Activated CD8-positive, alpha-beta T cell treated with anti-CD3 and anti-CD28 coated beads for 36 hours (primary cell): ENCODE measurements at regions of chr11 and their contacts with region 1.

Region 1: DNA sequence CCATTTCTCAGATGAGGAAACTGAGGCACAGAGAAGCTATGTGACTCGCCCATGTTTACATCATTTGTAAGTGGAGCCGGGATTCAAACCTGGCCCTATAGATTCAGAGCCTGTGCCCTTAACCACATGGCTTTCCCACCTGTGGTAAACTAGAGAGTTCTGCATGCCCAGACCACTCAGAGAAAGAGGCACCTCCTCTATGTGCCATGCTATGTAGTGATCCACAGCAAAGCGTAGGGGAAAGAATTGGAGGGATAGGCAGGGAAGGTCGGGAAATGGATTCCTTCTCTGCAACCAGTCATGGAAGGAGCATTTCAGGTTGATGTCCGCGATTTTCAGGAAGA is 15.4 kb upstream of the POU2AF2 start:
- DNase-seq: no peak
- ATAC-seq: peak; percentile 36
- H3K4me3 Mint-ChIP-seq: no peak overlapping the region
- H3K27ac Mint-ChIP-seq: no peak overlapping the region
- H3K4me1 Mint-ChIP-seq: peaks cover 15% of the 10 kb centered on the region
- H3K27me3 Mint-ChIP-seq: peaks cover 28% of the 10 kb centered on the region
- CTCF ChIP-seq: no peak

Region 2: GRCh38 chr11:110479108-110480101 is 750.7 kb before region 1 on chr11:
- CTCF ChIA-PET with region 1: interaction called, 3 read pairs
- POLR2A ChIA-PET with region 1: no interaction called
- intact Hi-C with region 1: loop called (anchors 10 kb)
- DNase-seq: no peak
- ATAC-seq: no peak
- H3K4me3 Mint-ChIP-seq: no peak overlapping the region
- H3K27ac Mint-ChIP-seq: no peak overlapping the region
- H3K4me1 Mint-ChIP-seq: no peaks in the 10 kb centered on the region
- H3K27me3 Mint-ChIP-seq: no peaks in the 10 kb centered on the region
- CTCF ChIP-seq: no peak

Region 3: GRCh38 chr11:111384494-111384893 is 154.4 kb after region 1 on chr11:
- CTCF ChIA-PET with region 1: no interaction called
- POLR2A ChIA-PET with region 1: no interaction called
- intact Hi-C with region 1: no loop called
- DNase-seq: no peak
- ATAC-seq: no peak
- H3K4me3 Mint-ChIP-seq: no peak overlapping the region
- H3K27ac Mint-ChIP-seq: no peak overlapping the region
- H3K4me1 Mint-ChIP-seq: peaks cover 32% of the 10 kb centered on the region
- H3K27me3 Mint-ChIP-seq: no peaks in the 10 kb centered on the region
- CTCF ChIP-seq: no peak